ENCODE measurements at regions of chr10 and their contacts with region 1.

Region 1: GRCh38 chr10:103013416-103013815 is 95.3 kb downstream of the CNNM2 start:
- DNase-seq: no peak
- ATAC-seq: no peak
- H3K4me3 ChIP-seq: no peak overlapping the region
- H3K27ac ChIP-seq: no peak overlapping the region
- H3K4me1 ChIP-seq: no peaks in the 10 kb centered on the region
- H3K27me3 ChIP-seq: no peaks in the 10 kb centered on the region
- CTCF ChIP-seq: no peak
- POLR2A ChIP-seq: no peak

Region 2: DNA sequence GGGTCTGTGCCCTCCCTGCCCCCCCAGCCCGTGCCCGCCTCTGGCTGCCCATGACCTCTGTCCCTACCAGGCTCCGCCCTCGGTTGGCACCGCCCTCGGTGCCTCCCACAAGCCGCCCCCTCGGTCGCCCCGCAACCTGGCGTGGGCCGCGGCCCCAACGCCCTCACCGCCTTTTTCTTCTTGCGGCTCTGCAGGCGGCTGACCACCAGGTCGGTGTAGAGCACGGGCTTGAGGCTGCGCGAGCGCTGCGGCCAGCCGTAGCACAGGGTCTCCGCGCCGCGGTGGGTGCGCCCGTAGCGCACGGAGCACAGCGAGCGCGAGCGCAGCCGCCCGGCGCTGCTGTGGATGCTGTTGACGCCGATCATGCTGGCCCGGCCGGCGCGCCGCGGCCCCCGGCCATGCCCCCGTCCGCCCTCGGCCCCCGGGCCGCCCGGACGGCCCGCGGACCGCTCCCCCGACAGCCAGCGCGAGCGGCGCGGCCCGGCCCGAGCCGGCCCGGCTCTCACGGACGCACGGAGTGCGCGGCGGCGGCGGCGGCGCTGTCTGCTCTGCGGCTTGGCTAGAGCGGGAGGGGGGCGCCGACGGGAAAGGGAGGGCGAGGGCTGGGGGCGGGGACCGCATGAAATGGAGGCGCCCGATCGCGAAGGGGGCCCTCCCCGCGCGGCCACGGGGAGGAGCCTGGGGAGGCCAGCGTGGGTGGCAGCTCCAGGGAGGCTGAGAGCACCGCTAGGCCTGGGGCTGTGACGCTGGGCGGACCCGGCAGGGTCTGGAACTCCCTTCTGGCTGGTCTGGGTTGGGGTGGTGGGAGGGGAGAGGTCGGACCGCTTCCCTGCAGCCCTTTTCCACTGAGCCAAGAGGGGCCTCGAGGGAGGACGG is 604.5 kb before region 1 on chr10:
- intact Hi-C with region 1: no loop called
- DNase-seq: peak in 2 of 5 donors; percentile 36 to 56
- ATAC-seq: peak in 3 of 4 donors; percentile 6 to 60 (median 21)
- H3K4me3 ChIP-seq: peak overlapping the region in 10 of 12 donors; percentile 17 to 53 (median 42)
- H3K27ac ChIP-seq: peak overlapping the region in 1 of 12 donors; percentile 99
- H3K4me1 ChIP-seq: peaks cover 0 to 26% (median 9%) of the 10 kb centered on the region in 12 donors
- H3K27me3 ChIP-seq: peaks cover 20 to 66% (median 39%) of the 10 kb centered on the region in 9 donors
- CTCF ChIP-seq: no peak
- POLR2A ChIP-seq: no peak

Region 3: DNA sequence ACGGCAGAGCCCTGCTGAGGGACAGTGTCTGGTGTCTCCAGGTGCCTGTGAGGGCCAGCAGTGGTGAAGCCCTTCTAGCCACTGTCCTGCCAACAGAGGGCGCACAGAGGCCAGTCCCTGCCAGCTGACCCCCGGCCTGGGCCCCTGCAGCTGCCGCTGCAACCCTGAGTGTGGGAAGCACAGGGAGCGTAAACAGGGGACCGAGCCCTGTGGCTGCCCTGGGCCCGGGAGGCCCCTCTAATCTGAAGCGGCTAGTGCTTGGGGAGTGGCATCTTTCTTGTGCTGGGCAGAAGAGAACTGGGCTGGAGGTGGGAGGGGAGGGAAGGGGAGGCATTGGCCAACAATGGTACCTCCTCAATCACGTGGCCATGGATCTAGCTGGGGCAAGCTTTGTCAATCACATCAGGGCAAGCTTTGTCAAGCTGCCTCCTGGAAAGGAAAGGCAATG is 334.6 kb before region 1 on chr10:
- intact Hi-C with region 1: no loop called
- DNase-seq: peak; percentile 70 to 85 (median 77)
- ATAC-seq: peak; percentile 54 to 71 (median 71)
- H3K4me3 ChIP-seq: peak overlapping the region in 3 of 12 donors; percentile 18 to 24 (median 21)
- H3K27ac ChIP-seq: peak overlapping the region in 10 of 12 donors; percentile 0 to 71 (median 54)
- H3K4me1 ChIP-seq: peaks cover 9 to 58% (median 51%) of the 10 kb centered on the region in 12 donors
- H3K27me3 ChIP-seq: no peaks in the 10 kb centered on the region
- CTCF ChIP-seq: peak; percentile 42 to 76 (median 70)
- POLR2A ChIP-seq: no peak

Region 4: DNA sequence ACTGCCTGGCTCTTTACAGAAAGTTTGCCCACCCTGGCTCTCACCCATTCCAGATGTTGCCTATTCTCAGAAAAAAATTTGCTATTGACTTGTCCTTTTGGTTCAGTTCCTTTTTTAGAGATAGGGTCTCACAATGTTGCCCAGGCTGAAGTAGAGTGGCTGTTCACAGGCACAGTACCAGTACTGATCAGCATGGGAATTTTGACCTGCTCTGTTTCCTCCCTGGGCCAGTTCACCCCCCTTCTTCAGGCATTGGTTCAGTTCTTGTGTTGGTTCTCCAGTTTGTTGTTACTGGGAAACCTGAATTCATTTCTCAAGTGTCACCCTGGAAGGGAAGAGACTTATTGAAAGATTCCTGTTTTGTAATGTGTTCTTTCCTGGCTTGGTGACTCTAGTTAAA is 42.9 kb before region 1 on chr10:
- intact Hi-C with region 1: loop called in 1 of 10 experiments (anchors 5 kb)
- DNase-seq: no peak
- ATAC-seq: no peak
- H3K4me3 ChIP-seq: no peak overlapping the region
- H3K27ac ChIP-seq: no peak overlapping the region
- H3K4me1 ChIP-seq: peaks cover 0 to 3% (median 0%) of the 10 kb centered on the region in 12 donors
- H3K27me3 ChIP-seq: no peaks in the 10 kb centered on the region
- CTCF ChIP-seq: no peak
- POLR2A ChIP-seq: no peak

Measured in heart left ventricle (tissue), 16 donors.